ENCODE measurements at regions of chr4 and their contacts with region 1.

Region 1: GRCh38 chr4:100823066-100823992 is 305.5 kb upstream of the EMCN start:
- DNase-seq: peak; percentile 57
- H3K4me3 Mint-ChIP-seq: no peak overlapping the region
- H3K27ac Mint-ChIP-seq: peak overlapping the region; percentile 88
- H3K4me1 Mint-ChIP-seq: peaks cover 15% of the 10 kb centered on the region
- H3K27me3 Mint-ChIP-seq: no peaks in the 10 kb centered on the region

Region 2: DNA sequence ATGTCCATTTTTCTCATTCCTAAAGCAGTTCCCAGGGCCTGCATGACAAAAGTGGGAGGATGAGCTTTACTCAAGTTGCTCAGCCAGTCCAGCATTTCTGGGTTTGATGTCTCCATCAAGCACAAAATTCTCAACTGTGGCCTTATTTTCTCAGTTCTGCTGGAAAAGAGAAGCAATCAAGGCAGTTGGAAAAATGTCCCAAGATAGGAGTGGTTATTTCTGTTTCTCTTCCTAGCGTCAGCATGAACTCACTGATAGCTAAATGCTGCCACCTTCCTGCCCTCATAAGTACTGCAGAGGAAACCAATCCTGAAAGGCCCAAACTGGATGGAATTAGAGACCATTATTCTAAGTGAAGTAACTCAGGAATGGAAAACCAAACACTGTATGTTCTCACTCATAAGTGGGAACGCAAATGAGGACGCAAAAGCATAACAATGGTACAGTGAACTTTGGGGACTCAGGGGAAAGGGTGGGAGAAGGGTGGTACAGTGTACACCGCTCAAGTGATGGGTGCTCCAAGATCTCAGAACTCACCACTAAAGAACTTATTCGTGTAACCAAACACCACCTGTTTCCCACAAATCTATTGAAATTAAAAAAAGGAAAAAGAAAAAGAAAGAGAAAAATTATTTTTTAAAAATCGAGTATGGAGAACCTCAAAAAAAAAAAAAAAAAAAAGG is 1417.8 kb before region 1 on chr4:
- CTCF ChIA-PET with region 1: no interaction called
- POLR2A ChIA-PET with region 1: no interaction called
- intact Hi-C with region 1: no loop called
- DNase-seq: peak; percentile 66
- H3K4me3 Mint-ChIP-seq: no peak overlapping the region
- H3K27ac Mint-ChIP-seq: no peak overlapping the region
- H3K4me1 Mint-ChIP-seq: peaks cover 18% of the 10 kb centered on the region
- H3K27me3 Mint-ChIP-seq: peaks cover 2% of the 10 kb centered on the region

Region 3: GRCh38 chr4:100082852-100083251 is 740.5 kb before region 1 on chr4:
- CTCF ChIA-PET with region 1: no interaction called
- POLR2A ChIA-PET with region 1: no interaction called
- intact Hi-C with region 1: loop called (anchors 1 kb)
- DNase-seq: no peak
- H3K4me3 Mint-ChIP-seq: no peak overlapping the region
- H3K27ac Mint-ChIP-seq: peak overlapping the region; percentile 64
- H3K4me1 Mint-ChIP-seq: peaks cover 37% of the 10 kb centered on the region
- H3K27me3 Mint-ChIP-seq: peaks cover 7% of the 10 kb centered on the region

Region 4: DNA sequence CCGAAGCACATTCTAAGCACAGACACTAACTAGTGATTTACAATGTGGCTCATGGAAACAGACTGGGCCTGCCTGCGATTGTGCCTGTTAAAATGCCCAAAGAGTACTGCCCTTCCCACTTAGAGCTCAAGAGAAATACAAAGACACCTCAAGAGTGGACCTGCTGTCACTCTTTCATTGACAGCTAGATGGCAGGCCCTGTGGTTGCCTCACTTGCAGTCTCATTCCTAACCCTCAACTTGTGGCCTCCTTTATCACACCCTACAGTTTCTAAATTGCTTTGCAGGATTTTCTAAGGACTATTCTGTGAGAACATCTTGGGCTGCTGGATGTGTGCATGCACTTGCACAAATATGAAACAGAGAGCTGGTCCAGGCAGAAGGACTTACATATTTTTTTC is 25.5 kb after region 1 on chr4:
- CTCF ChIA-PET with region 1: no interaction called
- POLR2A ChIA-PET with region 1: no interaction called
- intact Hi-C with region 1: loop called (anchors 1 kb)
- DNase-seq: peak; percentile 36
- H3K4me3 Mint-ChIP-seq: no peak overlapping the region
- H3K27ac Mint-ChIP-seq: no peak overlapping the region
- H3K4me1 Mint-ChIP-seq: no peaks in the 10 kb centered on the region
- H3K27me3 Mint-ChIP-seq: no peaks in the 10 kb centered on the region

Region 5: GRCh38 chr4:101037938-101038413 is 214.6 kb after region 1 on chr4:
- CTCF ChIA-PET with region 1: no interaction called
- POLR2A ChIA-PET with region 1: no interaction called
- intact Hi-C with region 1: loop called (anchors 2 kb)
- DNase-seq: peak; percentile 44
- H3K4me3 Mint-ChIP-seq: no peak overlapping the region
- H3K27ac Mint-ChIP-seq: peak overlapping the region; percentile 52
- H3K4me1 Mint-ChIP-seq: peaks cover 27% of the 10 kb centered on the region
- H3K27me3 Mint-ChIP-seq: no peaks in the 10 kb centered on the region

Region 6: GRCh38 chr4:101155368-101155767 is 332.0 kb after region 1 on chr4:
- CTCF ChIA-PET with region 1: no interaction called
- POLR2A ChIA-PET with region 1: no interaction called
- intact Hi-C with region 1: loop called (anchors 1 kb)
- DNase-seq: no peak
- H3K4me3 Mint-ChIP-seq: no peak overlapping the region
- H3K27ac Mint-ChIP-seq: no peak overlapping the region
- H3K4me1 Mint-ChIP-seq: peaks cover 45% of the 10 kb centered on the region
- H3K27me3 Mint-ChIP-seq: no peaks in the 10 kb centered on the region

Region 7: DNA sequence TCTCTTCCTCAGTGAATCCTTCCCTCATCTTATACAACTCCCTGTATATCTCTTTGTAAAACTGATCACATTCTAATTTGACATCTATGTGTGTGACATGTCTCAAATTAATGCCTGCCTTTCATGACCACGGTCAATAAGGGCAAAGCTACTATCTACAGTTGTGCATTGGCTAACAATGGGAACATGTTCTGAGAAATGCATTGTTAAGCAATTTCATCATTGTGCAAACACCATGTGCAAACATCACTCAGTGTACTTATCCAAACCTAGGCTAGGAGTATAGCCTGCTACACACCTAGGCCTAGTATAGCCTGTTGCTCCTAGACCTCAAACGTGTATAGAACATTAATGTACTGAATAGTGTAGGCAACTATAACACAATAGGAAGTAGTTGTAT is 1062.2 kb after region 1 on chr4:
- CTCF ChIA-PET with region 1: no interaction called
- POLR2A ChIA-PET with region 1: no interaction called
- intact Hi-C with region 1: no loop called
- DNase-seq: no peak
- H3K4me3 Mint-ChIP-seq: no peak overlapping the region
- H3K27ac Mint-ChIP-seq: no peak overlapping the region
- H3K4me1 Mint-ChIP-seq: no peaks in the 10 kb centered on the region
- H3K27me3 Mint-ChIP-seq: no peaks in the 10 kb centered on the region